Endothelial cell of umbilical vein (primary cell): ENCODE measurements at regions of chr14 and their contacts with region 1.

Region 1: DNA sequence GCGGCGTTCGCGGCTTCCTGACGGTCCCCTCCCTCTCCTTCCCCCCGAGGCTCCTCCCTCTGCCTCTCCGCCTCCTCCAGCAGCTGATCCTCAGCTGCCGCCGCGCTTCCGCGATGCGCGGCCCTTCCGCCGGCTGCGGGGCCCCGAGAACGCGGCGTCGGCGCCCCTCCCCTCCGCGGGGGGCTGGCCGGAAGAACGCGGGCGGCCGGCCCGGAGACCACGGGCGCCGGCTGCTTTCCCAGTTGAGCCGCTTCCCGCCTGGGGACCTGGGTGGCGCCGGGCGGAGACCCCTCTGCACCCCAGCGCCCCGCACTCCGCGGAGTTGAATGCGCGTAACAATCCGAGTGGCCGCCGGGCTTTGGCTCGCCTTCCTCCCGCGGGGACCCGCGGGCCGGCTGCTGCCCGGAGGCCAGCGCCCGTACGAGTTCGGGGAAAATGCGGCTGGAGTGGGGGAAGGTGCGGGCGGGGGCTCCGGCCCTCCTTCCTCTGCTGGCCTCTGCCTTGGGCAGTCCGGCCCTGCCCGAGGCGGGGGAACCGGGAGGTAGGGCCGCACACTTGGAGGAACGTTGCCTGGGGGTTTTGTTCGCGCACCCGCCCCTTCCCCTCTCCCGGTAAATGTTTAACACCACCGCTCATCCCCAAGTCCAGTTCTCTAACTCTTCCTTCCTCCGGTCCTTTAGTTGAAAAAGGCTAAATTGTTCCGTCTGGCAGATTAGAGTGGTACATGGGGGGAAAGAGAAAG is 383 bp upstream of the DCAF5 start:
- DNase-seq: peak; percentile 89
- H3K4me3 ChIP-seq: peak overlapping the region; percentile 81 to 97 (median 83)
- H3K27ac ChIP-seq: peak overlapping the region; percentile 55
- H3K4me1 ChIP-seq: peaks cover 26% of the 10 kb centered on the region
- H3K27me3 ChIP-seq: no peaks in the 10 kb centered on the region
- CTCF ChIP-seq: no peak
- POLR2A ChIP-seq: peak; percentile 61

Region 2: GRCh38 chr14:69093631-69094421 is 59.5 kb before region 1 on chr14:
- CTCF ChIA-PET with region 1: no interaction called
- POLR2A ChIA-PET with region 1: no interaction called
- dilution Hi-C with region 1: no loop called
- intact Hi-C with region 1: no loop called
- DNase-seq: peak; percentile 79
- H3K4me3 ChIP-seq: no peak overlapping the region
- H3K27ac ChIP-seq: peak overlapping the region; percentile 63
- H3K4me1 ChIP-seq: peaks cover 29% of the 10 kb centered on the region
- H3K27me3 ChIP-seq: no peaks in the 10 kb centered on the region
- CTCF ChIP-seq: no peak
- POLR2A ChIP-seq: no peak

Region 3: GRCh38 chr14:69138189-69138535 is 15.1 kb before region 1 on chr14:
- CTCF ChIA-PET with region 1: interaction called, 12 read pairs
- POLR2A ChIA-PET with region 1: interaction called, 3 read pairs
- dilution Hi-C with region 1: no loop called
- intact Hi-C with region 1: no loop called
- DNase-seq: peak; percentile 49
- H3K4me3 ChIP-seq: no peak overlapping the region
- H3K27ac ChIP-seq: no peak overlapping the region
- H3K4me1 ChIP-seq: peaks cover 14% of the 10 kb centered on the region
- H3K27me3 ChIP-seq: no peaks in the 10 kb centered on the region
- CTCF ChIP-seq: no peak
- POLR2A ChIP-seq: no peak

Region 4: GRCh38 chr14:69191340-69192111 is 38.2 kb after region 1 on chr14 and contains the start of gene EXD2:
- CTCF ChIA-PET with region 1: interaction called, 5 read pairs
- POLR2A ChIA-PET with region 1: no interaction called
- dilution Hi-C with region 1: no loop called
- intact Hi-C with region 1: loop called (anchors 1 kb)
- DNase-seq: peak; percentile 65
- H3K4me3 ChIP-seq: peak within 1 kb of the TSS; percentile 70 to 79 (median 76)
- H3K27ac ChIP-seq: peak within 1 kb of the TSS; percentile 32
- H3K4me1 ChIP-seq: peaks cover 7% of the 10 kb centered on the region
- H3K27me3 ChIP-seq: no peaks in the 10 kb centered on the region
- CTCF ChIP-seq: no peak
- POLR2A ChIP-seq: no peak
- total RNA-seq, gene EXD2: 18.6 and 22.6 TPM in 2 replicates

Region 5: GRCh38 chr14:69226178-69226577 is 72.9 kb after region 1 on chr14:
- CTCF ChIA-PET with region 1: no interaction called
- POLR2A ChIA-PET with region 1: no interaction called
- dilution Hi-C with region 1: no loop called
- intact Hi-C with region 1: loop called (anchors 5 kb)
- DNase-seq: peak; percentile 92
- H3K4me3 ChIP-seq: no peak overlapping the region
- H3K27ac ChIP-seq: peak overlapping the region; percentile 47
- H3K4me1 ChIP-seq: peaks cover 9% of the 10 kb centered on the region
- H3K27me3 ChIP-seq: no peaks in the 10 kb centered on the region
- CTCF ChIP-seq: no peak
- POLR2A ChIP-seq: no peak

Region 6: DNA sequence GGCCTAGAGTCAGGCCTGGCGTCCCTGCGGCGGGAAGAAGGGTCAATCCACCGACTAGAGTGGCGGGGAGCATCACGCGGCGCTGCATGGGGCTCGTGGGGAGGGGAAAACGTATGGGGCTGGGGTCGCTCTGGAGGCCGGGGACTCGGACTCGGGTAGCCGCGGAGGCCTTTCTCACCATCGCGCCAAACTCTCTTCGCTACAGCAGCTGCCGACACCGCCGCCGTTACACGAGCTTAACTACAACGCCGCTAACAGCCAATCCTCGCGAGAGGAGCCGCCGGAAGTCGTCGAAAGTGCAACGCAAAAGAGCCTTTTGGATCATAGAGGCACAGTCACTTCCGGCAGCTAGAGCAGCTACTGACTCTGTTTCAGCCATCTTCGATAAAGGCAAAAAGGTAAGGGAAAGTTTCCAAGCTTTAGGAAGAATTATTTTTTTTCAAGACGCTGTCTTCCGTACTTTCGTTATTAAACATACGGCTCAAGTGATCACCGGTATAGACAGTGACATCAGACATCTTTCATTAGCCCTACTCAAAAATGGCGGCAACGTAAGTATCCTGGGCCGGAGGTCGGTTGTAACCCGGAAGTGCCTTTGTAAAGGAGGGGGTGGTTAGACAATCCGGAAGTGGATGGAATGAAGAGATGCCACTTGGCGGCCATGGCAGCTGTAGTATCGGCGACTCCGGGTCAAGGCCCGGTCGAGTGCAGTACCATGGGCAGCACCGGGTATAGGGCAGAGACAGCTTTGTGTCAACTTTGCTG is 244.9 kb after region 1 on chr14 and contains the starts of genes ERH and SLC39A9:
- CTCF ChIA-PET with region 1: no interaction called
- POLR2A ChIA-PET with region 1: no interaction called
- dilution Hi-C with region 1: no loop called
- intact Hi-C with region 1: loop called (anchors 1 kb)
- DNase-seq: peak; percentile 98
- H3K4me3 ChIP-seq: peak within 1 kb of the TSS; percentile 13 to 100 (median 84)
- H3K27ac ChIP-seq: peak within 1 kb of the TSS; percentile 92
- H3K4me1 ChIP-seq: peaks cover 31% of the 10 kb centered on the region
- H3K27me3 ChIP-seq: no peaks in the 10 kb centered on the region
- CTCF ChIP-seq: no peak
- POLR2A ChIP-seq: peak; percentile 84
- total RNA-seq, gene ERH: 263 and 273 TPM in 2 replicates
- total RNA-seq, gene SLC39A9: 52.1 and 55.2 TPM in 2 replicates

Region 7: DNA sequence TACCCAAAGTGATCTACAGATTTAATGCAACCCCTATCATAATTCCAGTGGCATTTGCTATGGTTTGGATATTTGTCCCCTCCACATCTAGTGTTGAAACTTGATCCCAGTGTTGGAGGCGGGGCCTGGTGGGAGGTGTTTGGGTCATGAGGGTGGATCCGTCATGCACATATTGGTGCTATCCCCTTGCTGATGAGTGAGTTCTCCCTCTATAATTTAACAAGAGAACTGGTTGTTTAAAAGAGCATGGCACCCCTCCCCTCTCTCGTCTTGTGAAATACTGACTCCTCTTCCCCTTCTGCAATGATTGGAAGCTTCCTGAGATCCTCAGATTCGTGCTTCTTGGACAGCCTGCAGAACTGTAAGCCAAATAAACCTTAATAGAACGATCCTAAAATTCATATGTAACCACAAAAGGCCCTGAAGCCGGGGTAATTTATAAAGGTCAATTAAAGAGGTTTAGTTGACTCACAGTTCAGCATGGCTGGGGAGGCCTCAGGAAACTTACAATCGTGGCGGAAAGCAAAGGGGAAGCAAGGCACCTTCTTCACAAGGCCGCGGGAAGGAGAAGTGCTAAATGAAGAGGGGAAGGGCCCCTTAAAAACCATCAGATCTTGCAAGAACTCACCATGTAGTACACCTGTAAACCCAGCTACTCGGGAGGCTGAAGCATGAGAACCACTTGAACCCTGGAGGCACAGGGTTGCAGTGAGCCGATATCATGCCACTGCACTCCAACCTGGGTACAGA is 286.4 kb after region 1 on chr14:
- CTCF ChIA-PET with region 1: no interaction called
- POLR2A ChIA-PET with region 1: no interaction called
- dilution Hi-C with region 1: no loop called
- intact Hi-C with region 1: no loop called
- DNase-seq: no peak
- H3K4me3 ChIP-seq: no peak overlapping the region
- H3K27ac ChIP-seq: no peak overlapping the region
- H3K4me1 ChIP-seq: peaks cover 5% of the 10 kb centered on the region
- H3K27me3 ChIP-seq: no peaks in the 10 kb centered on the region
- CTCF ChIP-seq: no peak
- POLR2A ChIP-seq: no peak